ENCODE measurements at regions of chrX and their contacts with region 1.

Region 1: DNA sequence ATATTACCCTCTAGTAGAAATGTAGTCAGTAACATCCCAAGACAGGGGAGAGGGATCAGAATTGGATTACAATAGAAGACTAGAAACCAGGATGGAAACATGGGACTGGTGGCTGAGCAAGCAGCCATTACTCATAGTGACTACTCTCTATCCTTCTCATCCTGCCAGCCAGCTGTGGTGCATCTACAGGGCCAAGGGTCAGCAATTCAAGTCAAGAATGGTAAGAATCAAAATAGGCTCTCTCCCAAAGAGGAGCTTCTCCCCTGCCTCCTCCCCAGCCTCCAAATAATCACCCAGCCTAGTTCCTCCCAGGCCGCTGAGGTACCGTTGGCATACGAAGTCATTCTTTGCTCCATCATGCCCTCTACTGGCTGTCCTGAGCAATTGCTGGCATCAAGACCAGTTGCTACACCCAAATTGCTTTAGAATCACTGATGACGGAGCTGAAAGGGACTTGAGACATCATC is 19.4 kb downstream of the AWAT2 start:
- DNase-seq: peak; percentile 43 to 76
- H3K4me3 ChIP-seq: no peak overlapping the region
- H3K27ac ChIP-seq: no peak overlapping the region
- H3K4me1 ChIP-seq: peaks cover 0 to 5% (median under 1%) of the 10 kb centered on the region in 4 donors
- H3K27me3 ChIP-seq: peaks cover 0 to 4% (median 0%) of the 10 kb centered on the region in 3 donors
- CTCF ChIP-seq: peak in 4 of 7 experiments; percentile 42 to 65 (median 60)
- EP300 ChIP-seq: no peak
- POLR2A ChIP-seq: no peak

Region 2: GRCh38 chrX:69538321-69538876 is 491.9 kb before region 1 on chrX:
- intact Hi-C with region 1: loop called (anchors 10 kb)
- DNase-seq: peak; percentile 79 to 90
- H3K4me3 ChIP-seq: peak overlapping the region; percentile 42 to 47 (median 46)
- H3K27ac ChIP-seq: peak overlapping the region in 2 of 5 donors; percentile 39 to 59
- H3K4me1 ChIP-seq: peaks cover 0 to 7% (median 0%) of the 10 kb centered on the region in 4 donors
- H3K27me3 ChIP-seq: peaks cover 0 to 17% (median 4%) of the 10 kb centered on the region in 3 donors
- CTCF ChIP-seq: peak in 5 of 7 experiments; percentile 58 to 80 (median 63)
- EP300 ChIP-seq: no peak
- POLR2A ChIP-seq: no peak

Region 3: DNA sequence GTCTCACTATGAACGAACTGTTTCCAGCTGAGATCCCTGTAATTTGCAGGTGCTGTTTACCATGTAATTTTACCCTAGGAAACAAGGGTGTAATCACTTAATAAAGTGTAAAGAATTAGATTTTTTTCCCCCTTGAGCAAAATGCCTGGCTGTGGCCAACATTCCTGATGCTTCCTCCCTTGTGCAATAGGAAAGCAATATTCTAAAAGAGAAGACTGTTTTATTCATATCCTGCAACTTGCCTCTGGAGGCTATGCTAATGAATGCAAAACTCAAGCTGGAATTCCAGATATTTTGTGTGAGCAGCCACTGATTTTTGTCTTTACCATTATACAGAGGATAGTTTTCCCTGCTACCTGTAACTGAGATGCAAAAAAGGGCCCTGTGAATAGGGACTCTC is 78.6 kb before region 1 on chrX:
- intact Hi-C with region 1: no loop called
- DNase-seq: no peak
- H3K4me3 ChIP-seq: no peak overlapping the region
- H3K27ac ChIP-seq: no peak overlapping the region
- H3K4me1 ChIP-seq: no peaks in the 10 kb centered on the region
- H3K27me3 ChIP-seq: no peaks in the 10 kb centered on the region
- CTCF ChIP-seq: no peak
- EP300 ChIP-seq: no peak
- POLR2A ChIP-seq: no peak

Region 4: GRCh38 chrX:70096052-70096451 is 65.7 kb after region 1 on chrX:
- intact Hi-C with region 1: loop called (anchors 10 kb)
- DNase-seq: peak in 1 of 2 donors; percentile 27
- H3K4me3 ChIP-seq: no peak overlapping the region
- H3K27ac ChIP-seq: no peak overlapping the region
- H3K4me1 ChIP-seq: no peaks in the 10 kb centered on the region
- H3K27me3 ChIP-seq: no peaks in the 10 kb centered on the region
- CTCF ChIP-seq: no peak
- EP300 ChIP-seq: no peak
- POLR2A ChIP-seq: no peak